Ascending aorta (tissue), 2 donors: ENCODE measurements at regions of chr14 and their contacts with region 1.

Region 1: DNA sequence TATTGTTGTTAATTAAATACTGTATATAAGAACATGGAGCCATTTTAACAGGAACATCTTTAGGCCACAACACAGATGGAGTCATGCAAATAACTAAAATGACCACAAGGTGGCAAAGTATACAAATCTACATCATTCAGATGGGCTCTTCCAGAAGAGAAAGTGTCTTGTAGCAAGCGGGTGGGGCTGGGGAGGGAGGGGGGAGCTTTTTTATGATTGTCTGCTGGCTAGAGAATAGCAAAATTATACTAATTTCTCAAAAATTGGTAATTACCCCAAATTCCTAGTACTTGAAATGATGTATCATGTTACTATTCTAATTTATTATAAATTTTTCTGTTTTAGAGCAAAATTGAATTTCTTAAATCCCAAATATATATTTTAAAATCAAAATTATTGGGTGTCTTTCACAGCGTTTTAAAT is 378.7 kb downstream of the PRKD1 start:
- DNase-seq: no peak
- H3K4me3 ChIP-seq: no peak overlapping the region
- H3K27ac ChIP-seq: no peak overlapping the region
- H3K4me1 ChIP-seq: no peaks in the 10 kb centered on the region
- H3K27me3 ChIP-seq: no peaks in the 10 kb centered on the region
- CTCF ChIP-seq: peak; percentile 27 to 68 (median 55)

Region 2: GRCh38 chr14:29518335-29518734 is 30.6 kb before region 1 on chr14:
- intact Hi-C with region 1: no loop called
- DNase-seq: no peak
- H3K4me3 ChIP-seq: no peak overlapping the region
- H3K27ac ChIP-seq: no peak overlapping the region
- H3K4me1 ChIP-seq: no peaks in the 10 kb centered on the region
- H3K27me3 ChIP-seq: no peaks in the 10 kb centered on the region
- CTCF ChIP-seq: no peak

Region 3: GRCh38 chr14:30005114-30005808 is 456.3 kb after region 1 on chr14:
- intact Hi-C with region 1: loop called (anchors 1 kb)
- DNase-seq: no peak
- H3K4me3 ChIP-seq: peak overlapping the region in 1 of 2 donors; percentile 21
- H3K27ac ChIP-seq: no peak overlapping the region
- H3K4me1 ChIP-seq: no peaks in the 10 kb centered on the region
- H3K27me3 ChIP-seq: no peaks in the 10 kb centered on the region
- CTCF ChIP-seq: peak; percentile 48 to 83 (median 64)

Region 4: DNA sequence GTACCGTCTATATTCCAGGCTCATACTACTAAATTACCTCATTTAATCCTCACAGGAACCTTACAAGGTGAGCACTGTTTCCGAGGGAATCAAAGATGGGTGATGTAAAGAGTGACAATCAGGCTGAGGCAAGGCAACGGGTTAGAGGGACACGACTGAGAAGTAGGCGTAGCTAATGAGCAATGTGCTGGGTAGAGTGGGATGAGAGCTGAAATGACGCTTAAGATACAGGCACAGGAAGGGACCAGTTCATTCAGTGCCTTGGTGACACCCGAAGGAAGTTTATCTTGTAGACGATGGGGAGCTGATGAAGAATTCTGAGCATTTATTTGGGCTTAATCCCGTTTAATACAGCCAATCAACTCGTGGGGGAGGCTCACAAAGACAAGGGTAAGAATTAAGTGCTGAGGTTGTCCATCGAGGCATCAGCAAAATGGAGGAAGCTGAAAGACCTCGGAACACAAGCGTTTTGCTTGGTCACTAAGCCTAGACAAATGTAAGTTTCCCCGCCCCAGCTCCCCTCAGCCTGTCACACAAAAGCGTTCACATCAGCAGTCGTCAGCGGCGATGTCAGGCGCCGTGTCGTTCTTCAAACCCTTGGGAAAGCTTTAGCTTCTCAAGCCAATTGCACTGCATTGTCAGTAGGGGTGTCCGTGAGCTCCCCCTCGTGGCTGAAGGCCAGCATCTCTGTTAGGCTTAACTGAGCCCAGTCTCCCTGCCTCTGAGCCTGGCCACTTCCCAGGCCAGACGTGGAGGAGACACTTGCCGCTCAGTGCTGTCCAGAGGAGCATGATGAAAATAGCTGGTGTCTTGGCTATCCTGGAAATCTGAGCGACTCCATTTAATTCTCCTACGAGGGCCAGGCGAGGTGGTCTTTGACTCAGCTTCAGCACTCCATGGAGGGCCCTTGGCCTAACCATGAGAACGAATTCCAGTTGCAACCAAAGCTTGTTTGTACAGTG is 721.5 kb after region 1 on chr14:
- intact Hi-C with region 1: loop called (anchors 10 kb)
- DNase-seq: peak; percentile 17 to 88
- H3K4me3 ChIP-seq: peak overlapping the region; percentile 35 to 58
- H3K27ac ChIP-seq: no peak overlapping the region
- H3K4me1 ChIP-seq: peaks cover 0 to 2% of the 10 kb centered on the region in 2 donors
- H3K27me3 ChIP-seq: no peaks in the 10 kb centered on the region
- CTCF ChIP-seq: peak; percentile 45 to 89 (median 85)